Activated B cell treated with CpG ODN at 0.5 μM for 24 hours (primary cell): ENCODE measurements at regions of chr6 and their contacts with region 1.

Region 1: DNA sequence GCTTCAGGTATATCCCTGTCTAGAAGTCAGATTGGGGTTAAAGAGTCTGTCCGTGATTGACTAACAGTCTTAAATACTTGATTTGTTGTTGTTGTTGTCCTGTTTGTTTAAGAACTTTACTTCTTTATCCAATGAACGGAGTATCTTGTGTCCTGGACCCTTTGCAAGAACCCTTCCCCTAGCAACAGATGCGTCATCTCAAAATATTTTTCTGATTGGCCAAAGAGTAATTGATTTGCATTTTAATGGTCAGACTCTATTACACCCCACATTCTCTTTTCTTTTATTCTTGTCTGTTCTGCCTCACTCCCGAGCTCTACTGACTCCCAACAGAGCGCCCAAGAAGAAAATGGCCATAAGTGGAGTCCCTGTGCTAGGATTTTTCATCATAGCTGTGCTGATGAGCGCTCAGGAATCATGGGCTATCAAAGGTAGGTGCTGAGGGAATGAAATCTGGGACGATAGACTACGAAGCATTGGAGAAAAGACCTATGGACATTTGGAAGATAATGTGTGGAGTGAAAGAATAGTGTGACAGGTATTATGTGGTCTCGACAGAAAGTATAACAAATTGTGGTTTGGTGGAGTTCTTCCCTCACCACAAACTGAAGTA is at the start of gene HLA-DRA:
- DNase-seq: no peak
- ATAC-seq: peak; percentile 72
- H3K4me3 Mint-ChIP-seq: peak within 1 kb of the TSS; percentile 96
- H3K27ac Mint-ChIP-seq: peak within 1 kb of the TSS; percentile 98
- H3K4me1 Mint-ChIP-seq: peaks cover 80% of the 10 kb centered on the region
- H3K27me3 Mint-ChIP-seq: no peaks in the 10 kb centered on the region
- CTCF ChIP-seq: no peak
- total RNA-seq, gene HLA-DRA: 2,835 and 3,035 TPM in 2 replicates

Region 2: GRCh38 chr6:32462609-32463008 is 22.9 kb after region 1 on chr6:
- CTCF ChIA-PET with region 1: no interaction called
- POLR2A ChIA-PET with region 1: interaction called, 161 read pairs
- intact Hi-C with region 1: no loop called
- DNase-seq: no peak
- ATAC-seq: peak; percentile 71
- H3K4me3 Mint-ChIP-seq: peak overlapping the region; percentile 69
- H3K27ac Mint-ChIP-seq: peak overlapping the region; percentile 76
- H3K4me1 Mint-ChIP-seq: peaks cover 22% of the 10 kb centered on the region
- H3K27me3 Mint-ChIP-seq: no peaks in the 10 kb centered on the region
- CTCF ChIP-seq: no peak

Region 3: GRCh38 chr6:32589598-32590449 is 150.1 kb after region 1 on chr6 and contains the start of gene HLA-DRB1:
- CTCF ChIA-PET with region 1: no interaction called
- POLR2A ChIA-PET with region 1: interaction called, 13 read pairs
- intact Hi-C with region 1: loop called (anchors 5 kb)
- DNase-seq: no peak
- ATAC-seq: peak; percentile 93
- H3K4me3 Mint-ChIP-seq: peak within 1 kb of the TSS; percentile 91
- H3K27ac Mint-ChIP-seq: peak within 1 kb of the TSS; percentile 98
- H3K4me1 Mint-ChIP-seq: peaks cover 66% of the 10 kb centered on the region
- H3K27me3 Mint-ChIP-seq: no peaks in the 10 kb centered on the region
- CTCF ChIP-seq: no peak
- total RNA-seq, gene HLA-DRB1: 621 and 630 TPM in 2 replicates

Region 4: GRCh38 chr6:32637219-32637880 is 197.6 kb after region 1 on chr6 and contains the start of gene HLA-DQA1:
- CTCF ChIA-PET with region 1: no interaction called
- POLR2A ChIA-PET with region 1: interaction called, 103 read pairs
- intact Hi-C with region 1: no loop called
- DNase-seq: no peak
- ATAC-seq: peak; percentile 85
- H3K4me3 Mint-ChIP-seq: peak within 1 kb of the TSS; percentile 100
- H3K27ac Mint-ChIP-seq: peak within 1 kb of the TSS; percentile 100
- H3K4me1 Mint-ChIP-seq: peaks cover 72% of the 10 kb centered on the region
- H3K27me3 Mint-ChIP-seq: no peaks in the 10 kb centered on the region
- CTCF ChIP-seq: no peak
- total RNA-seq, gene HLA-DQA1: 628 and 664 TPM in 2 replicates

Region 5: GRCh38 chr6:32666420-32667300 is 227.0 kb after region 1 on chr6 and contains the start of gene HLA-DQB1:
- CTCF ChIA-PET with region 1: interaction called, 3 read pairs
- POLR2A ChIA-PET with region 1: interaction called, 81 read pairs
- intact Hi-C with region 1: loop called (anchors 1 kb)
- DNase-seq: no peak
- ATAC-seq: peak; percentile 65
- H3K4me3 Mint-ChIP-seq: peak within 1 kb of the TSS; percentile 90
- H3K27ac Mint-ChIP-seq: peak within 1 kb of the TSS; percentile 94
- H3K4me1 Mint-ChIP-seq: peaks cover 65% of the 10 kb centered on the region
- H3K27me3 Mint-ChIP-seq: no peaks in the 10 kb centered on the region
- CTCF ChIP-seq: no peak
- total RNA-seq, gene HLA-DQB1: 262 and 310 TPM in 2 replicates

Region 6: DNA sequence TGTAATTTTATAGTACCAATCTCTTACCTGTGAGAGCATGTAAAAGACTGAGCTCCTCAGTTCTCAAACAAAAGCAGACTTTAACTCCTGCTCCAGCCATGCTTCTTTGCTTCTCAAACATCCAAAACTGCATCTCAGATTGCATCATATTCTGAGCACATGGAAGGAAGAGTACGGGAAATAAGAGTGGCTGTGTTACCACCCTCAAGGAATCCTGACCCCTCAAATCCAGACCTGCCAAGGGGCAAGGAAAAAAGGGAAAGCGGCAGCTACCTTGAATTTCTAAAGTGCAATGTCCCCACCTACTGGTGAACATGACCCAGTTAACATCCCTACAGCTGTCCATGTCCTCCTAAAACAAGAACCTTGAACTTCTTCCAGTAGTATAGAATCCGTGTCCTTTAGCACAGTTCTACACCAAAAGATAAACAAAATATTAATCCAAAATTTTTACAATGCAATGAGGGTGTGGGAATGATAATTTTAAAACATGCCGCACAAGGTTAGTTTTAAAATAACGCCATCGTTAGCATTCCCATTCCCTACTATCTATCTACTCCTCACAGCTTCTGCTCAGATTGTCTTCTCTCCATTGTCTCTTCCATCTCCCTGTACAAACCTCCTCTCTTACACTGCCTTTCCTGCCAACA is 260.8 kb after region 1 on chr6:
- CTCF ChIA-PET with region 1: interaction called, 18 read pairs
- POLR2A ChIA-PET with region 1: interaction called, 12 read pairs
- intact Hi-C with region 1: no loop called
- DNase-seq: no peak
- ATAC-seq: peak; percentile 80
- H3K4me3 Mint-ChIP-seq: peak overlapping the region; percentile 86
- H3K27ac Mint-ChIP-seq: peak overlapping the region; percentile 91
- H3K4me1 Mint-ChIP-seq: peaks cover 32% of the 10 kb centered on the region
- H3K27me3 Mint-ChIP-seq: no peaks in the 10 kb centered on the region
- CTCF ChIP-seq: peak; percentile 32